Body of pancreas (tissue), 4 donors: ENCODE measurements at regions of chr11 and their contacts with region 1.

Region 1: DNA sequence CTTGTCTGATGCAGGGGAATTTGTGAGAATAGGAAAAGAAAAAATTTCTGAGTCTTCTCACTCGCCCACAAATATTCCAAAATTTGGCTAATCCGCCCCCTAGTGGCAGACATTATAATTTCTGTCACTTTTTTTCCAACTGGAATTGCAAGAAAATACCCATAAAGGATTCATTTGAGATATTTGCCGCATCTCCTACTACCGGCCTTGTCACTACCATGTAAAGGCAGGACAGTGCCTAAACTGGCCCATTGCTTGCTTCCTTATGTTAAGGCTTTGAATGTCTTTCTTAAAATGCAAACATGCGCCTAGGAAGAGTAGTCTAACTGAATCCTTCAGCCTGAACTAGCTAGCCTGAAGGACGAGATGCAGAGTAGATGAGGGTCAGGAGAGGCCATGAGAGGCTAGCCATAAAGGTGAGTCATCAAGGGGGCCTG is 9.3 kb upstream of the CEP295 start:
- DNase-seq: peak in 3 of 4 donors; percentile 16 to 32 (median 16)
- ATAC-seq: peak; percentile 35
- H3K4me3 ChIP-seq: no peak overlapping the region
- H3K27ac ChIP-seq: no peak overlapping the region
- H3K4me1 ChIP-seq: no peaks in the 10 kb centered on the region
- H3K27me3 ChIP-seq: no peaks in the 10 kb centered on the region
- CTCF ChIP-seq: peak; percentile 61 to 78 (median 69)
- POLR2A ChIP-seq: no peak

Region 2: DNA sequence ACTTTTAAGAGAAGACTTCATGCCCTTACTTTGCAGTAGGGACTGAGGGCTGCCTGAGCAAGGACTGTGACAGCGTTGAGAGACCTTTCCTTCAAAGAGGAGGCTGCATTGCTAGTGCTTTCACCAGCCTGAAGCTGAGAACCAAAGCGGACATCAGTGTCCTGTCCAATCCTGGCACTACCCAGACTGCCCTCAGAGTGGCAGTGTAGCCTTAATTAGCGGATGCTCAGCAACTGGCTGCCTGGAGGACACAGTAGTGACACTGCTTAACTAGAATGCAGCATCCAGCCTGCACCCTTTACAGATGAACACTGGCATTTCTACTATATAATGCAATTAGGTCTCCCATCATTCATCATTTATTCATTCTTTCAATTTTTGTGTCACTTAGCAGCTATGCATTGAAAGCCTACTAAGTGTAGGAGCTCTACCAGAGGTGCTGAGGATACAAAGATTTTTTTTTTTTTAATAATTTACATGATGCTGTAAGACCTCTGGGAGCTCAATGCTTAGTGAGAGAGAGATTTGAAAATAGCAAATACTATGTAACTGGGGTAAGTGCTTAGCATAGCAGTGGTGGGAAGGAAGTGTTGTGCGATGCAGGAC is 417.5 kb before region 1 on chr11:
- intact Hi-C with region 1: loop called (anchors 5 kb)
- DNase-seq: peak; percentile 85 to 90 (median 89)
- ATAC-seq: peak; percentile 99
- H3K4me3 ChIP-seq: no peak overlapping the region
- H3K27ac ChIP-seq: no peak overlapping the region
- H3K4me1 ChIP-seq: peaks cover 14% of the 10 kb centered on the region
- H3K27me3 ChIP-seq: no peaks in the 10 kb centered on the region
- CTCF ChIP-seq: peak; percentile 72 to 97 (median 96)
- POLR2A ChIP-seq: no peak

Region 3: DNA sequence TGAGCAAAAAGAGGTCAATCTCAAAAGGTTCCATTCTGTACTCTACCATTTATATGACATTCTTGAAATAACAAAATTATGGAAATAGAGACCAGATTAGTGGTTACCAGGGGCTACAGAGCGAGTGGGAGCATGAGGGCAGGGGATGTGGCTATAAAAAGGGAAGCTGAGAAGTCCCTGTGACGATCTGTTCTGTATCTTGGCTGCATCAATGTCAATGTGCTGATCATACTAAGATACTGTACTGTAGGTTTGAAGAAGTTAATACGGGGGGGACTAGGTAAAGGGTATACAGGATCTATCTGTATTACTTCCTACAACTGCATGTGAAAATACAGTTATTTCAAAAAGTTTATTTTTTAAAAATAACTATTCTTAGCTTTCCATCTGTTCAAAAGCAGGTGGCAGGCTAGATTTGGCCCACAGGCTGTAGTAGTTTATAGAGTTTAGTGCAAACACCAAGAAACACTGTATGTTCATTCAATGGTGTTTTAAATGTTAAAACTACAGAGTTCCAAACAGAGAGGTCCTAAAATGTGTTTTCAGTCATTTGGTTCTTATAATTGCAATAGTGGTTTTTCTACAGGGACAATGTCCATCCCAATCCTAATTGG is 187.1 kb before region 1 on chr11:
- intact Hi-C with region 1: no loop called
- DNase-seq: no peak
- ATAC-seq: no peak
- H3K4me3 ChIP-seq: no peak overlapping the region
- H3K27ac ChIP-seq: no peak overlapping the region
- H3K4me1 ChIP-seq: peaks cover 12% of the 10 kb centered on the region
- H3K27me3 ChIP-seq: no peaks in the 10 kb centered on the region
- CTCF ChIP-seq: no peak
- POLR2A ChIP-seq: no peak

Region 4: DNA sequence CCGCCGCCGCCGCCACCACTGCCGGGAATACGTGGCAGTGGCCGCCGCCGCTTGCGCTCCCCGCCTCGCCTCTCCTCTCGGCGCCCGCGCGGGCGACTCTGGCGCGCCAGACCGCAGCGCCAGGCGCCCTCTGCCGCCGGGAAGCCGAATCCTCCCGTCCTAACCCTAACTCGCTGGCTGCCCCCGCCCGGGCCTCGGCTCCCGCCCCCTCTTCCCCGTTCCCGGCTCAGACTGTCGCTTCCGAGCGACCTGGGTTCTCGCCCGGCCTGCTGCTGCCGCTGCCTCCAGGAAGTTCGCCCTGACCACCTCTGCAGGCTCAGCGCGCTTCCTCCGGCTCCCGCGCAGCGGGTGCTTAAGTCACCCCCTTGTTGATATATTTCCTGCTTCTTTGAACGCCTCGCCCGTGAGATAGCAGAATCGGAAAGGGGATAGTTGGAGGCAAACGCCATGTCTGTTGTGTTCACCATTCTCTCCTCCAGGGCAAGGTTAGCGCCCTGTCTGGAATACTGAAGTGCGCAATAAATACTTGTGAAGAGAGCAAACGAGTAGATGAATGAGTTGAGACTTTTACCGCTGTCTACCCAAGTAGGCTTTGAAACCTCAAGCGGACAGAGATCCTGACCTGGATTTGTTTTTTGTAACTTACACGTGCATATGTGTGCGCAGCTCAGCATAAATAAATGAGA is 108.7 kb before region 1 on chr11 and contains the start of gene SMCO4:
- intact Hi-C with region 1: loop called (anchors 10 kb)
- DNase-seq: peak; percentile 86 to 89 (median 87)
- ATAC-seq: peak; percentile 92
- H3K4me3 ChIP-seq: peak within 1 kb of the TSS; percentile 64 to 72
- H3K27ac ChIP-seq: peak within 1 kb of the TSS; percentile 68 to 93 (median 90)
- H3K4me1 ChIP-seq: peaks cover 21% of the 10 kb centered on the region
- H3K27me3 ChIP-seq: no peaks in the 10 kb centered on the region
- CTCF ChIP-seq: peak; percentile 63 to 93 (median 81)
- POLR2A ChIP-seq: peak; percentile 22 to 53 (median 43)
- total RNA-seq, gene SMCO4: 4.6 to 27.5 TPM